ENCODE measurements at regions of chr3 and their contacts with region 1.

Region 1: GRCh38 chr3:171772427-171773056 is 37.7 kb downstream of the PLD1 start:
- DNase-seq: no peak
- H3K4me3 ChIP-seq: no peak overlapping the region
- H3K27me3 ChIP-seq: 0 out of 2 replicates have a peak, but pooled peaks cover 1% of the 10 kb centered on the region
- CTCF ChIP-seq: peak; percentile 77

Region 2: GRCh38 chr3:171556148-171557145 is 216.1 kb before region 1 on chr3:
- CTCF ChIA-PET with region 1: no interaction called
- POLR2A ChIA-PET with region 1: no interaction called
- DNase-seq: no peak
- H3K4me3 ChIP-seq: no peak overlapping the region
- H3K27me3 ChIP-seq: no peaks in the 10 kb centered on the region; the same call in 1 of the 2 replicates
- CTCF ChIP-seq: no peak

Region 3: GRCh38 chr3:171640520-171641412 is 131.8 kb before region 1 on chr3:
- CTCF ChIA-PET with region 1: interaction called, 38 read pairs
- POLR2A ChIA-PET with region 1: no interaction called
- DNase-seq: peak; percentile 39
- H3K4me3 ChIP-seq: no peak overlapping the region
- H3K27me3 ChIP-seq: no peaks in the 10 kb centered on the region
- CTCF ChIP-seq: peak; percentile 41

Region 4: GRCh38 chr3:171646357-171647133 is 126.0 kb before region 1 on chr3:
- CTCF ChIA-PET with region 1: interaction called, 38 read pairs
- POLR2A ChIA-PET with region 1: no interaction called
- DNase-seq: peak; percentile 19
- H3K4me3 ChIP-seq: no peak overlapping the region
- H3K27me3 ChIP-seq: no peaks in the 10 kb centered on the region
- CTCF ChIP-seq: peak; percentile 57

Region 5: GRCh38 chr3:171757361-171758034 is 15.0 kb before region 1 on chr3:
- CTCF ChIA-PET with region 1: interaction called, 18 read pairs
- POLR2A ChIA-PET with region 1: no interaction called
- DNase-seq: no peak
- H3K4me3 ChIP-seq: no peak overlapping the region
- H3K27me3 ChIP-seq: no peaks in the 10 kb centered on the region
- CTCF ChIP-seq: no peak

Region 6: DNA sequence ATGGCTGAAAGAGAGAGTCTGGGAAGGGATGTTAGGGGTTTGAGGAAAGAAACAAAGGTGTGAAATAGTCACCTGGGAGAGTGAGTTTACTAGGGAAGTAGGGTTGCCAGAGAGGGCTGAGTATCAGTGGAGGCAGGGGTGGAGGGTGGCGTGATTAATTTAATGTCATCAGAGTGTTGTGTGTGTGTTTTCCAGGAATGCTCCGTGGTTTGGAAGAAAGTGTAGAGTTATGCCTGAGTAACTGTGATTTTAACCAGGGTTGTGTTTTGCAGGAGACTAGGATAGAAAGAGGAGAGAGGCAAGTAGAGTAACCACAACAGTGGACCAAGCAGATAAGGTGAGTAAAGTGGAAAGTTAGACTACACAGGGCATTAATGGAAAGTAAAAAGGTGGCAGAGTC is 10.5 kb after region 1 on chr3:
- CTCF ChIA-PET with region 1: interaction called, 13 read pairs
- POLR2A ChIA-PET with region 1: no interaction called
- DNase-seq: no peak
- H3K4me3 ChIP-seq: no peak overlapping the region
- H3K27me3 ChIP-seq: no peaks in the 10 kb centered on the region; the same call in 1 of the 2 replicates
- CTCF ChIP-seq: no peak

Region 7: GRCh38 chr3:171829841-171830517 is 57.4 kb after region 1 on chr3:
- CTCF ChIA-PET with region 1: interaction called, 14 read pairs
- POLR2A ChIA-PET with region 1: no interaction called
- DNase-seq: no peak
- H3K4me3 ChIP-seq: no peak overlapping the region
- H3K27me3 ChIP-seq: no peaks in the 10 kb centered on the region
- CTCF ChIP-seq: peak; percentile 82

Region 8: GRCh38 chr3:171967137-171967783 is 194.7 kb after region 1 on chr3:
- CTCF ChIA-PET with region 1: no interaction called
- POLR2A ChIA-PET with region 1: no interaction called
- DNase-seq: peak; percentile 90
- H3K4me3 ChIP-seq: no peak overlapping the region
- H3K27me3 ChIP-seq: no peaks in the 10 kb centered on the region
- CTCF ChIP-seq: no peak

Region 9: DNA sequence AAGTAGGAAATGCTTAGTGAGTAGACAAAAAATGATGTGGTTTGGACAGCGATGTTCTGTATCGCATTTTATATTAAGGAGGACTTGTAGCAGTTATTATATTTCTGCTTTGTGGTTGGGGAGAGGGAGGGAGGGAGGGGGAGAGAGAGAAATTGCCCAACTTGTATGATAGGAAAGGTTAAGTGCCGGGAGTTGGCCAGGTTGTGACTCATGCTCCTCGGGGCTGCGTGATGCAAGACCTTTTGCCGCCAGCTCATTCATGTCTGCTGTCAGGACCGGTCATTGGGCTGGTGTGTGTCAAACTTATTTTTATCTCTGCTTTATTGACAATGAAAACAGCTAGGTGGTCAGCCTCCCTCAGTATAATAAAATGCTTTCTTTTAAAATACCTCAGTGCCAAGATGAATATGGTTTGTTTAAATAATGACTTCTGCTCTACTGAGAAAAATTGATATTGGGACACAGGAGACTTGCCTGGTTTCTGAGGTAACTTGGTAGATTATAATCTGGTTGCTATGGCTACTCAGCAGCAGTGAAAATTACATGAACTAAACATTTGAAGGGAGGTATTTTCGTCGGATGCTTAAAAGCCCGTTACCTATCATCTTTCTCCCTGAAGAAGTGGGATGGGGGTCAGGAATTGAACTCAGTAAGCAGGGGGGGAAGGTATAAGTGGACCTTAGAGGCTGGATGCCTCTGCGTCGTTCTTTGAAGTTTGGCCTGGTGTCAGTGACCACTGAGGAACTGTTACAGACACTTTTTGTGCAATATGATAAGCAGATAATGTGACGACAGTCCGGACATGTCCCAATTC is 357.5 kb after region 1 on chr3:
- CTCF ChIA-PET with region 1: no interaction called
- POLR2A ChIA-PET with region 1: no interaction called
- DNase-seq: peak; percentile 98
- H3K4me3 ChIP-seq: no peak overlapping the region
- H3K27me3 ChIP-seq: no peaks in the 10 kb centered on the region
- CTCF ChIP-seq: no peak